BJ (cell line): ENCODE measurements at regions of chr7 and their contacts with region 1.

Region 1: GRCh38 chr7:150962553-150963399 is 15.3 kb downstream of the KCNH2 start:
- DNase-seq: no peak
- H3K4me3 ChIP-seq: no peak overlapping the region
- H3K27me3 ChIP-seq: peaks cover 3% of the 10 kb centered on the region
- CTCF ChIP-seq: peak; percentile 92

Region 2: GRCh38 chr7:150567169-150567568 is 395.6 kb before region 1 on chr7 and contains the start of gene GIMAP4:
- CTCF ChIA-PET with region 1: no interaction called
- POLR2A ChIA-PET with region 1: no interaction called
- DNase-seq: no peak
- H3K4me3 ChIP-seq: no peak within 1 kb of the TSS
- H3K27me3 ChIP-seq: no peaks in the 10 kb centered on the region
- CTCF ChIP-seq: no peak
- polyA plus RNA-seq, gene GIMAP4: not detected in 2 replicates

Region 3: DNA sequence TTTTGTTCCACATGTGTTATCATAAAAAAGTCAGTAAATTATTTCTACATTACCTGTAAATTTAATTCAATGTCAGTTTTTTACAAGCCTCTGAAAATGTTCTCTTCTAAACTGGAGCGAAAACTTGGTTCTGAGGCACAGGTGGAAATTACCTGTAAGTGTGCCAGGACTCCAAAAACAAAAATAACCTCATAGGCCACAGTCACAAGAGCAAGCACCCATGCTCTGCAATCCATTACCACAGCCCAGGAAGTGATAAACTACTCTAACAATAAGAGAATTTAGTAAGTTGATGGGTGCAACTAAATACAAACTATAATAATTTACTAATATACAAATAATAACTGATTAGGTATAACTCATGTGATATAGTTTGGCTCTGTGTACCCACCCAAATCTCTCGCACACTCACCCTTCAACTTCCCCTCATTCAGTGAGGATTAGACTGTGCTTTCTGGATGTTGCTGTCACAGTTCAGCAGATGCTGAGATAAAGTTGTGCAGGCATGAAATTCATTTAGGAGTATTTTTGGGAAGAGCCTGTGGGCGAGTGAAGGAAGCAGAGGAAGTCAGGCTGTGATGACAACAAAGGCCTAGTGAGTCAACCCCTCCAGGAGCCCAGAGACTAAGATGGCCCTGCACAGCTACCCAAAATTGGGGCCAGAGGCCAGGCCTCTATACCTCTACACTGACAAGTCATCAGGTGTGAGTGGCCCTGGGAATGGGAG is 314.3 kb before region 1 on chr7:
- CTCF ChIA-PET with region 1: no interaction called
- POLR2A ChIA-PET with region 1: no interaction called
- DNase-seq: no peak
- H3K4me3 ChIP-seq: no peak overlapping the region
- H3K27me3 ChIP-seq: no peaks in the 10 kb centered on the region
- CTCF ChIP-seq: no peak

Region 4: GRCh38 chr7:150974468-150975391 is 12.0 kb after region 1 on chr7:
- CTCF ChIA-PET with region 1: interaction called, 16 read pairs
- POLR2A ChIA-PET with region 1: no interaction called
- DNase-seq: no peak
- H3K4me3 ChIP-seq: peak overlapping the region; percentile 39
- H3K27me3 ChIP-seq: peaks cover 28% of the 10 kb centered on the region
- CTCF ChIP-seq: peak; percentile 29